Body of pancreas (tissue), 4 donors: ENCODE measurements at regions of chr20 and their contacts with region 1.

Region 1: GRCh38 chr20:34069341-34070078 is 42.5 kb downstream of the EIF2S2 start:
- DNase-seq: peak; percentile 77 to 86 (median 84)
- ATAC-seq: peak; percentile 91
- H3K4me3 ChIP-seq: no peak overlapping the region
- H3K27ac ChIP-seq: peak overlapping the region in 3 of 4 donors; percentile 26 to 54 (median 34)
- H3K4me1 ChIP-seq: peaks cover 19% of the 10 kb centered on the region
- H3K27me3 ChIP-seq: no peaks in the 10 kb centered on the region
- CTCF ChIP-seq: peak; percentile 58 to 95 (median 88)
- POLR2A ChIP-seq: no peak

Region 2: GRCh38 chr20:33719989-33720709 is 349.4 kb before region 1 on chr20 and contains the start of gene PXMP4:
- intact Hi-C with region 1: no loop called
- DNase-seq: peak; percentile 88 to 96 (median 92)
- ATAC-seq: peak; percentile 100
- H3K4me3 ChIP-seq: peak within 1 kb of the TSS; percentile 72 to 75
- H3K27ac ChIP-seq: peak within 1 kb of the TSS; percentile 52 to 75 (median 64)
- H3K4me1 ChIP-seq: peaks cover 18% of the 10 kb centered on the region
- H3K27me3 ChIP-seq: no peaks in the 10 kb centered on the region
- CTCF ChIP-seq: peak in 1 of 7 experiments; percentile 1
- POLR2A ChIP-seq: peak in 2 of 3 donors; percentile 68 to 71
- total RNA-seq, gene PXMP4: 3.3 to 5.2 TPM

Region 3: DNA sequence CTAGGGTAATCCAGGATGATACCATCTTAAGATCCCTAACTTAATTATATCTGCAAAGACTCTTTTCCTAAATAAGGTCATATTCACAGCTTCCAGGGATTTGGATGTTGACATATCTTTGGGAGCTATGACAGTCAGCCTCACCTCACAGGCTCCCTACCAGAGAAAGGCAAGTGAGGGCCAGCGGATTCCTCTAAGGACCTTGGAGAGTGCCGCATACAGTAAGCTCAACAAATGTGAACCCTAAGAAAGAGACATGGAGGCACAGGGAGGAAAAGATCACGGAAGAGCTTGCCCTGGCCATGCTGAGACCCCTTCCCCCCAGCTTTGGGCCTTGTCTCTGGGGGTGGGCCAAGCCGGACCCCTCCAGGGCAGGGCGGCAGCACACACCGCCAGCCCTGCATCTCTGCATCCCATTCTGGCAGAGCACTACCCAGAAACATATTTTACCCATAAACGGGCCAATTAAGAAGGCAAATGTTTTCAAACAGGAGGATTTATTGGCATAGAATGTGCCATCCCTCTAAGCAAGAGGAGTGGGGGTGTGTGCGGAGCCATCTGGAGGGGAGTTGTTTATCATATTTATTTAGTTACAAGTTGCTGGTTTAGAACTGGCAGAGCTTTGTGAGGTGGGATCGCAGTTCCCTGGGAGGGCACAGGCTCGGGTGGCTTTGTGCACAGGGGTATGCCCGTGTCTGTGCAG is 203.0 kb before region 1 on chr20:
- intact Hi-C with region 1: loop called (anchors 5 kb)
- DNase-seq: no peak
- ATAC-seq: no peak
- H3K4me3 ChIP-seq: no peak overlapping the region
- H3K27ac ChIP-seq: no peak overlapping the region
- H3K4me1 ChIP-seq: peaks cover 5% of the 10 kb centered on the region
- H3K27me3 ChIP-seq: no peaks in the 10 kb centered on the region
- CTCF ChIP-seq: no peak
- POLR2A ChIP-seq: no peak

Region 4: DNA sequence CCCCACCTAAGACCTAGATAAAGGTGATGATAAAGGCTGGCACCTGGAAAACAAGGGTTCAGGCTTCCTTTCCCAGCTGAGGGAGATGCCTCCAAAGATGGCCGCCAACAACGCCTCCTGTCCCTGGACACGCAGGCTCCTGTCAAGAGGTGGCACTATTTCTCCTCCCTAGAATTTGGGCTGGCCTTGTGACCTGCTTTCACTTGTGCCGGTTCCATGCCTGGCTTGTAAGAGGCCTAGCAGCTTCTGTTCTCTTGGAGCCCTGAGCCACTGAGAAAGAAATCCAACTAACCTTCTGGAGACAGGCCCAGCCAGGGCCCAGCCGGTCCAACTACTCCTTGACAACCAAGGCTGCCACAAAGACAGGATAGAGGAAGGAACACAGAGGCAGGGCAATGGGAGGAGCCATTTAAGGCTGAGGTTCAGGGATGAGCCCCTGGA is 136.0 kb before region 1 on chr20:
- intact Hi-C with region 1: loop called (anchors 5 kb)
- DNase-seq: peak; percentile 73 to 80 (median 80)
- ATAC-seq: peak; percentile 90
- H3K4me3 ChIP-seq: no peak overlapping the region
- H3K27ac ChIP-seq: peak overlapping the region in 2 of 4 donors; percentile 15 to 26
- H3K4me1 ChIP-seq: peaks cover 5% of the 10 kb centered on the region
- H3K27me3 ChIP-seq: no peaks in the 10 kb centered on the region
- CTCF ChIP-seq: peak; percentile 17 to 81 (median 67)
- POLR2A ChIP-seq: no peak